Caco-2 (cell line): ENCODE measurements at regions of chr2 and their contacts with region 1.

Region 1: GRCh38 chr2:105454801-105455485 is 56.1 kb upstream of the FHL2 start:
- DNase-seq: peak; percentile 60 to 70
- H3K4me3 ChIP-seq: no peak overlapping the region
- H3K4me3 Mint-ChIP-seq: no peak overlapping the region
- H3K27ac Mint-ChIP-seq: peak overlapping the region; percentile 91
- H3K4me1 ChIP-seq: peaks cover 15% of the 10 kb centered on the region
- H3K4me1 Mint-ChIP-seq: peaks cover 16% of the 10 kb centered on the region
- H3K27me3 ChIP-seq: no peaks in the 10 kb centered on the region
- H3K27me3 Mint-ChIP-seq: no peaks in the 10 kb centered on the region
- CTCF ChIP-seq: peak; percentile 44 to 61

Region 2: GRCh38 chr2:105383432-105384166 is 71.3 kb before region 1 on chr2:
- CTCF ChIA-PET with region 1: no interaction called
- POLR2A ChIA-PET with region 1: no interaction called
- intact Hi-C with region 1: loop called (anchors 2 kb)
- DNase-seq: no peak
- H3K4me3 ChIP-seq: no peak overlapping the region
- H3K4me3 Mint-ChIP-seq: no peak overlapping the region
- H3K27ac Mint-ChIP-seq: no peak overlapping the region
- H3K4me1 ChIP-seq: peaks cover 13% of the 10 kb centered on the region
- H3K4me1 Mint-ChIP-seq: peaks cover 22% of the 10 kb centered on the region
- H3K27me3 ChIP-seq: no peaks in the 10 kb centered on the region
- H3K27me3 Mint-ChIP-seq: no peaks in the 10 kb centered on the region
- CTCF ChIP-seq: no peak

Region 3: GRCh38 chr2:105444219-105444598 is 10.7 kb before region 1 on chr2:
- CTCF ChIA-PET with region 1: no interaction called
- POLR2A ChIA-PET with region 1: no interaction called
- intact Hi-C with region 1: loop called (anchors 1 kb)
- DNase-seq: peak in 1 of 2 experiments; percentile 29
- H3K4me3 ChIP-seq: no peak overlapping the region
- H3K4me3 Mint-ChIP-seq: no peak overlapping the region
- H3K27ac Mint-ChIP-seq: no peak overlapping the region
- H3K4me1 ChIP-seq: peaks cover 18% of the 10 kb centered on the region
- H3K4me1 Mint-ChIP-seq: peaks cover 12% of the 10 kb centered on the region
- H3K27me3 ChIP-seq: no peaks in the 10 kb centered on the region
- H3K27me3 Mint-ChIP-seq: no peaks in the 10 kb centered on the region
- CTCF ChIP-seq: no peak

Region 4: GRCh38 chr2:105744091-105744908 is 289.4 kb after region 1 on chr2:
- CTCF ChIA-PET with region 1: no interaction called
- POLR2A ChIA-PET with region 1: no interaction called
- intact Hi-C with region 1: no loop called
- DNase-seq: peak; percentile 58 to 79
- H3K4me3 ChIP-seq: peak overlapping the region; percentile 67
- H3K4me3 Mint-ChIP-seq: peak overlapping the region; percentile 80
- H3K27ac Mint-ChIP-seq: peak overlapping the region; percentile 85
- H3K4me1 ChIP-seq: peaks cover 20% of the 10 kb centered on the region
- H3K4me1 Mint-ChIP-seq: peaks cover 21% of the 10 kb centered on the region
- H3K27me3 ChIP-seq: no peaks in the 10 kb centered on the region
- H3K27me3 Mint-ChIP-seq: no peaks in the 10 kb centered on the region
- CTCF ChIP-seq: no peak